Activated CD4-positive, alpha-beta memory T cell treated with anti-CD3 and anti-CD28 coated beads for 36 hours (primary cell): ENCODE measurements at regions of chr5 and their contacts with region 1.

Region 1: DNA sequence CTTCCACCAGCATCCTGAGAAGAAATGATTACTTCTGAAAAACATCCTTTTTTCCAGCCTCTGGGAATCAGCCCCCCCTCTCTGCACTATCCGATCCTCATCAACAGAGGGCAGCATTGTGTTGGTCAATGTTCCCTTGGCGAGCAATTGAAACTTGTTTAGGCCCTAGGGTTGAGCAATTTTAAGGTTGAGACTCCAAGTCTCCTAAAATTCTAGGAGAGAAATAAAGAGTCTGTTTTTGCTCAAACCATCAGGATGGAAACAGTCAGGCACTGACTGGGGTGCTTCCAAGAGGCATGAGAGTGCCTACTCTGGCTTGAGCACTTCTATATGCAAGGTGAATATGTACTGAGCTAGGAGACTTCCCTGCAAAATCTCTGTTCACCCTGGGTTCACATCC is 12.4 kb upstream of the CYFIP2 start:
- DNase-seq: no peak
- H3K4me3 Mint-ChIP-seq: peak overlapping the region; percentile 39
- H3K27ac Mint-ChIP-seq: peak overlapping the region; percentile 96
- H3K4me1 Mint-ChIP-seq: peaks cover 92% of the 10 kb centered on the region
- H3K27me3 Mint-ChIP-seq: no peaks in the 10 kb centered on the region

Region 2: GRCh38 chr5:157142317-157143126 is 111.0 kb before region 1 on chr5 and contains the start of gene MED7:
- CTCF ChIA-PET with region 1: interaction called, 26 read pairs
- POLR2A ChIA-PET with region 1: interaction called, 5 read pairs
- intact Hi-C with region 1: loop called (anchors 2 kb)
- DNase-seq: peak; percentile 96
- H3K4me3 Mint-ChIP-seq: peak within 1 kb of the TSS; percentile 96
- H3K27ac Mint-ChIP-seq: peak within 1 kb of the TSS; percentile 99
- H3K4me1 Mint-ChIP-seq: peaks cover 49% of the 10 kb centered on the region
- H3K27me3 Mint-ChIP-seq: no peaks in the 10 kb centered on the region
- total RNA-seq, gene MED7: 17.2 to 19.2 TPM

Region 3: DNA sequence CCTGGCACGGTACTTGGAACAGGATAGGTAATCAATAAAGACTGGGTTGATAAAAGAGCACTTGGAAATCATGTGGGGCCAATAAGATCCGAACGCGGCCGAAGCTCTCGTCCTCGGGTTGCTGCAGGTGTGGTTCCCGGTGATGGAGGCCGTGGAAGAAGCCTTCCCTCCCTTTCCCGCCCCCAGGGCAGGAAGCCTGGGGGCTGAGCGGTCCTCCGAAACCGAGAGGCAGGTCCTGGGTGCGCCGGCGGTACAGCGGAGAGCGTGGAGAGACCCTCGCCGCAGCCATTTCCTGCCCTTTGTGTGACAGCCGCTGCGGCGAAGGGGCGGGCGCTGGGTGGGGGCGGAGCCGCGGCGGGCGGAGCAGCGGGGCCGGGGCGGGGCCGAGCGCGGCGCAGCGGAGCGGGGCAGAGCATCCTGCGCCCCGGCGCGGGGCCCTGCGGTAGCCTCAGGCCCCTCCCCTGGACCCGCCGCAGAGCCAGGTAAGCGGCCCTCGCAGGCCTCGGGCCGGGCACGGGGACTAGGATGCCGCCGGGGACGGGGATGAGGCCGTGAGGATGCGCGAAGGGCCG is 12.3 kb after region 1 on chr5 and contains the start of gene CYFIP2:
- CTCF ChIA-PET with region 1: interaction called, 28 read pairs
- POLR2A ChIA-PET with region 1: interaction called, 18 read pairs
- intact Hi-C with region 1: loop called (anchors 1 kb)
- DNase-seq: peak; percentile 91
- H3K4me3 Mint-ChIP-seq: peak within 1 kb of the TSS; percentile 96
- H3K27ac Mint-ChIP-seq: peak within 1 kb of the TSS; percentile 95
- H3K4me1 Mint-ChIP-seq: peaks cover 70% of the 10 kb centered on the region
- H3K27me3 Mint-ChIP-seq: no peaks in the 10 kb centered on the region
- total RNA-seq, gene CYFIP2: 319 to 321 TPM

Region 4: GRCh38 chr5:157312492-157312891 is 58.9 kb after region 1 on chr5:
- CTCF ChIA-PET with region 1: interaction called, 29 read pairs
- POLR2A ChIA-PET with region 1: no interaction called
- intact Hi-C with region 1: loop called (anchors 1 kb)
- DNase-seq: peak; percentile 74
- H3K4me3 Mint-ChIP-seq: no peak overlapping the region
- H3K27ac Mint-ChIP-seq: peak overlapping the region; percentile 82
- H3K4me1 Mint-ChIP-seq: peaks cover 31% of the 10 kb centered on the region
- H3K27me3 Mint-ChIP-seq: no peaks in the 10 kb centered on the region